Activated T-helper 1 cell treated with anti-CD3 and anti-CD28 coated beads, Interleukin-12 subunit alpha, Interleukin-12 subunit beta, Interleukin-2, Interleukin-4 antibody, amounts not matched to agents 30 ng/mL and 10 ng/mL and 1 ng/mL, durations not matched to agents 14 hours and 24 hours and 36 hours (primary cell): ENCODE measurements at regions of chr5 and their contacts with region 1.

Region 1: DNA sequence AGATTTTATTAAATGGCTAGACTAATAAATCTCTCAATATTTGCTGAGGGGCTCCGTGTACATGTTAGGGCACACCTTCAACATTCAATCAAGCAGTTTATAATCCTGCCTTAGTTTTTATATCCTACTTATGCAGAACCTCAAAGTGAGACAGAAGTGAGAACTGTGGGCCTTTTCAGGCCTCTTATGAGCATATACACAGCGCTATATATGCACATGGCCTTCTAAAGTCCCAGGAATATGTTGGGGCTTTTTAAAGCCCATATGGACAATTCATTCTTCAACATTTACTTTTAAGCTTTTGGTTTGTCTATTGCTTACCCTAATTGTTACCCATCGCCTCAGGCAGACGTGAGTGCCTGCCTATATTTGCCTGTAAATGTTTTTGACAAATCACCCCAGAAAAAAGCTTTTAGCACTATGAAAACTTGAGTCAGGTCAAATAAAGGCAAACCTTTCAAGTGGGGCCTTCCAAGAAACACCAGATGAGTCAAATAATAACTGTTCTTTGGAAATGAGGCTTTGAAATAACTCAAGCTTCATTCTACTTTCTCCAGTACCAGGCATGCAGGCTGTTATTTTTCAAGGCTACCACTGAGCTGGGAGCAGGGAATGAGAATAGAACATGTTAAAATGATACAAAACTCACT is 58.2 kb downstream of the ESM1 start:
- DNase-seq: no peak
- H3K4me3 Mint-ChIP-seq: no peak overlapping the region
- H3K27ac Mint-ChIP-seq: peak overlapping the region; percentile 3
- H3K4me1 Mint-ChIP-seq: peaks cover 8% of the 10 kb centered on the region
- H3K27me3 Mint-ChIP-seq: peaks cover 14% of the 10 kb centered on the region

Region 2: DNA sequence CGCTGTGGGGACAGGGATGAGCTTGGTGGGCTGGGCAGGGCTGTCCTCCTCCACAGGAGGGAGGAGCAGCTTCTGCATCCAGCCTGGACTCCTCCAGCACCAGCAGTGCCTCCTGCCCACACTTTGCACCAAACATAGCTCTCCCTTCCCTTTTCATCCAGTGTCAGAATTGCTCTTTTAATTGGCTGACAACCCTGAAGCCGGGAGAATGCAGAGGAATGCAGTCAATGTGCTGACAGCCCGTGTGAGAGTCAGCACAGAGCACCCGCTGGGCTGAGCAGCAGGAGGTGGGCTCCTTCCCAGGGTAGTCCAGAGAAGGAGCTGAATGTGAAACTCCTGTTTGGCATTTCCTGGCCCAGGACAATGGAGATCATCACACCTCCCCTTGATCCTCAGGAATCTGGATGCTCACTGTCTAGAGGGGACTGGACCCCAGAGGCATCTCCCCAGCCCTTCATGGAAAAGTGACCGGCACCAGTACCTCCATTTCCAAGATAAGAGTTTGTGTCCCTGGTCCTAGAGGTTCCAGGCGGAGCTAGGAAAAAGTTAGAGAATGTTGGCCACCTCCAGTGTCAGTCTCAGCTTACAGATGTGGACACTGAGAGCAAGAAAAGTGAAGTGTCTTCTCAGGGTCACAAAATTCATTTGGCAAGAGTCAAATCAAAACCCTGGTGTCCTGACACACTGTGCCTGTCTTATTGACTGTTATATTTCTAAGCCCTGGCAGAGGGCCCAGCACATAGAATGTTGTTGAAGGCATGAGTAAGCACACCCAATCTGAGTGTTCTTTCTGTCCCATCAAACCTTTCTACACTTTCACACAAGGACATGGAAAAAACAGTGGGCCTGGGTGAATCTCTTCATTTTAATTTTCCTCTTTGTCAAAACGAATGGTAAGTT is 207.6 kb before region 1 on chr5:
- intact Hi-C with region 1: no loop called
- DNase-seq: no peak
- H3K4me3 Mint-ChIP-seq: no peak overlapping the region
- H3K27ac Mint-ChIP-seq: peak overlapping the region; percentile 80
- H3K4me1 Mint-ChIP-seq: peaks cover 46% of the 10 kb centered on the region
- H3K27me3 Mint-ChIP-seq: no peaks in the 10 kb centered on the region

Region 3: GRCh38 chr5:54915466-54916027 is 11.7 kb before region 1 on chr5:
- intact Hi-C with region 1: loop called (anchors 1 kb)
- DNase-seq: no peak
- H3K4me3 Mint-ChIP-seq: no peak overlapping the region
- H3K27ac Mint-ChIP-seq: no peak overlapping the region
- H3K4me1 Mint-ChIP-seq: peaks cover 6% of the 10 kb centered on the region
- H3K27me3 Mint-ChIP-seq: peaks cover 55% of the 10 kb centered on the region

Region 4: GRCh38 chr5:55021410-55021809 is 94.2 kb after region 1 on chr5:
- intact Hi-C with region 1: loop called (anchors 1 kb)
- DNase-seq: no peak
- H3K4me3 Mint-ChIP-seq: no peak overlapping the region
- H3K27ac Mint-ChIP-seq: no peak overlapping the region
- H3K4me1 Mint-ChIP-seq: peaks cover 52% of the 10 kb centered on the region
- H3K27me3 Mint-ChIP-seq: no peaks in the 10 kb centered on the region

Region 5: GRCh38 chr5:55146543-55147151 is 219.4 kb after region 1 on chr5:
- intact Hi-C with region 1: loop called (anchors 1 kb)
- DNase-seq: peak; percentile 82
- H3K4me3 Mint-ChIP-seq: peak overlapping the region; percentile 20
- H3K27ac Mint-ChIP-seq: no peak overlapping the region
- H3K4me1 Mint-ChIP-seq: peaks cover 31% of the 10 kb centered on the region
- H3K27me3 Mint-ChIP-seq: peaks cover 17% of the 10 kb centered on the region